A673 (cell line): ENCODE measurements at regions of chr13 and their contacts with region 1.

Region 1: GRCh38 chr13:70527599-70527998 is 419.3 kb upstream of the KLHL1 start:
- DNase-seq: no peak
- H3K4me3 ChIP-seq: no peak overlapping the region
- H3K27ac ChIP-seq: no peak overlapping the region
- H3K4me1 ChIP-seq: no peaks in the 10 kb centered on the region
- H3K27me3 ChIP-seq: no peaks in the 10 kb centered on the region
- CTCF ChIP-seq: no peak

Region 2: DNA sequence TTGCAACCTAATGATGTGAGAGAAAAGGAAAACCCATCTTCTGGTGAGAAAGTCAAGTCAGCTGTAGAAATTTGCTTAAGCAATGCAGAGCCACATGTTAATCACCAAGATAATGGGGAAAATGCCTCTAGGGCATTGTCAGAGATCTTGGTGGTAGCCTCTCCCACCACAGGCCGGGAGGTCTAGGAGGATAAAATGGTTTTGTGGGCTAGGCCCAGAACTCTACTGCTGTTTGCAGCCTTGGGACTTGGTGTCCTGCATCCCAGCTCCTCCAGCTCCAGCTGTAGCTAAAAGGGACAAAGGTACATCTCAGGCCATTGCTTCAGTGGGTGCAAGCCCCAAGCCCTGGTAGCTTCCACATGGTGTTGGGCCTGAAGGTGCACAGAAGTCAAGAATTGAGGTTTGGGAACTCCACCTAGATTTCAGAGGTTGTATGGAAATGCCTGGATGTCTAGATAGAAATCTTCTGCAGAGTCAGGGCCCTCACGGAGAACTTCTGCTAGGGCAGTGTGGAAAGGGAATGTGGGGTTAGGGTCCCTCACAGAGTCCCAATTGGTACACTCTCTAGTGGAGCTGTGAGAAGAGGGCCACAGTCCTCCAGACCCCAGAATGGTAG is 37.2 kb before region 1 on chr13:
- CTCF ChIA-PET with region 1: no interaction called
- POLR2A ChIA-PET with region 1: no interaction called
- intact Hi-C with region 1: loop called (anchors 1 kb)
- DNase-seq: no peak
- H3K4me3 ChIP-seq: no peak overlapping the region
- H3K27ac ChIP-seq: no peak overlapping the region
- H3K4me1 ChIP-seq: no peaks in the 10 kb centered on the region
- H3K27me3 ChIP-seq: no peaks in the 10 kb centered on the region
- CTCF ChIP-seq: no peak

Region 3: DNA sequence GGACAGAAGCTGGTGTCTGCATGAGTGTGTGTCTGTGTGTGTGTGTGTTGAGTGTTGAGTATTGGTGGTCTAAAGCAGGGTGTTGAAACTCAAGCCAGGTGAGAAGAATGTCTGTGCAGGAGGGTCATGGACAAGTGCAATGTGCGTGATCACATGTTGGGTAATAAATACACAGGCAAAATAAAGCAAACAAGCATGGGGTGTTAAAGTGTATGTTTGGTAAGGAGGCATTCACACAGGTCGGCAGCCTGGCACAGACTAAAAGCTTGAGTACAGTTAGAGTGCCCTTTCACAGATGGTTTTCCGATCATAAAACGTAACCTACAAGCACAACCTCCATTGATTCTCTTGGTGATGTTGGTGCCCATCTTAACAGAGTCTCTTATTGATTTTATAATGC is 57.5 kb after region 1 on chr13:
- CTCF ChIA-PET with region 1: no interaction called
- POLR2A ChIA-PET with region 1: no interaction called
- intact Hi-C with region 1: no loop called
- DNase-seq: no peak
- H3K4me3 ChIP-seq: no peak overlapping the region
- H3K27ac ChIP-seq: no peak overlapping the region
- H3K4me1 ChIP-seq: no peaks in the 10 kb centered on the region
- H3K27me3 ChIP-seq: no peaks in the 10 kb centered on the region
- CTCF ChIP-seq: no peak